ENCODE measurements at regions of chr3 and their contacts with region 1.

Region 1: GRCh38 chr3:139588450-139588849 is 48.9 kb upstream of the RBP1 start:
- DNase-seq: peak; percentile 63 to 71
- H3K4me3 ChIP-seq: no peak overlapping the region
- H3K4me3 Mint-ChIP-seq: no peak overlapping the region
- H3K27ac Mint-ChIP-seq: no peak overlapping the region
- H3K4me1 ChIP-seq: no peaks in the 10 kb centered on the region; the same call in 1 of the 2 replicates
- H3K4me1 Mint-ChIP-seq: peaks cover 12% of the 10 kb centered on the region
- H3K27me3 ChIP-seq: no peaks in the 10 kb centered on the region
- H3K27me3 Mint-ChIP-seq: no peaks in the 10 kb centered on the region
- CTCF ChIP-seq: peak; percentile 36 to 58

Region 2: GRCh38 chr3:139481116-139481515 is 107.3 kb before region 1 on chr3:
- CTCF ChIA-PET with region 1: no interaction called
- POLR2A ChIA-PET with region 1: no interaction called
- intact Hi-C with region 1: no loop called
- DNase-seq: no peak
- H3K4me3 ChIP-seq: no peak overlapping the region
- H3K4me3 Mint-ChIP-seq: no peak overlapping the region
- H3K27ac Mint-ChIP-seq: no peak overlapping the region
- H3K4me1 ChIP-seq: peaks cover 26% of the 10 kb centered on the region
- H3K4me1 Mint-ChIP-seq: peaks cover 18% of the 10 kb centered on the region
- H3K27me3 ChIP-seq: no peaks in the 10 kb centered on the region
- H3K27me3 Mint-ChIP-seq: no peaks in the 10 kb centered on the region
- CTCF ChIP-seq: no peak

Region 3: DNA sequence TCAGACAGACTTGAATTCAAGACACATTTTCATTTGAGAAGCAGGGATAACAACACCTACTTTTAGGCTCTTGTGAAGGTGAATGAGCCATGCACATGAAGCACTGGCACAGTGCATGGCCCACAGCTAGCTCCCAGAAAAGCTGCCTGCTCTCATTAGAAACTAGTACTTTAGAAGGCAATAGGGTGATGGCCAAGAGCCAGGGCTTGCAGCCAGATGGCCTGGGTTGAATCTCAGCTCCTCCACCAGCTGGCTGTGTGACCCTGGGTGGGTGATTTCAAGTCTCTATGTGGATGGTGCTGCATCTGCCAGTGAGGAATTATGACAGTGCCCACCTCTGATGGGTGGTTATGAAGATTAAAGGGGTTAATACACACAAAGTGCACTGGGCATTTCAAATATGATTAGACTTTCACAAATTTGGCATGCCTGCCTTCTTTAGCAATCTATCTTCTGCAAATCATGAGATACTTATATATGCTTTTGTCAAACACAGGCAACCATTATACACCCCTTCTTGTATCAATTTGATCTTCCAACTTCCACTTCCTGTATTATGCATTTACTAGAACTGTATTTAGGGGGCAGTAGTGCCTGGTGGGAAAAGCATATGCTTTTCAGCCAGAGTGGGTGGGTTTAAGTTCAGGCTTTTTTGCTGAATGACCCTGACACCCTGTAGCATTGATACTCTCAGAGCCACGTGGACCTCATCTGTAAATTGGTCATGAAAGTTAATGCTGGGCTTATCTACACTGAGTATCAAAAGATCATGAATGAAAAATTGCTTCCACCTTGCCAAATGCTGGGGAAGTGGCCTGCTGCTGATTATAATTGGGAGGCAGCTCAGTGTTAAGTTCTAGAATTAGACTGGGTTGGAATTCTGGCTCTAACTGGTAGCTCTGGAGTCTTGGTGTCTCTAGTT is 14.2 kb before region 1 on chr3:
- CTCF ChIA-PET with region 1: no interaction called
- POLR2A ChIA-PET with region 1: no interaction called
- intact Hi-C with region 1: no loop called
- DNase-seq: no peak
- H3K4me3 ChIP-seq: no peak overlapping the region
- H3K4me3 Mint-ChIP-seq: no peak overlapping the region
- H3K27ac Mint-ChIP-seq: no peak overlapping the region
- H3K4me1 ChIP-seq: no peaks in the 10 kb centered on the region
- H3K4me1 Mint-ChIP-seq: no peaks in the 10 kb centered on the region
- H3K27me3 ChIP-seq: no peaks in the 10 kb centered on the region
- H3K27me3 Mint-ChIP-seq: no peaks in the 10 kb centered on the region
- CTCF ChIP-seq: no peak

Region 4: DNA sequence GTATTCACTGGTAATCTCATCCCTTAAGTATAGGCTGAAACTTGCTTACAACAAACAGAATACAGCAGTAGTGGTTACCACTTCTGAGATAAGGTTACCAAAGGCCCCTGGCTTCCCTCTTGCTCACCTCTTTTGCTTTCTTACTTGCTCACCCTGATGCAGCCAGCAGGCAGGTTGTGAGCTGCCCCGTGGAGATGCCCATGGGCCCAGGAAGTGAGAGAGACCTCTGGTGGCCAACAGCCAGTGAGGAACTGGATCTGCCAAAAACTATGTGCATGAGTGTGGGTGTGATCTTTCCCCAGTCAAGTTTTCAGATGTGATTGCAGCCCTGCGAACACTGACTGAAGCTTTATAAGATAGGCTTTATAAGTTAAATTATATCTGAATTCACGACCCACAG is 40.6 kb after region 1 on chr3:
- CTCF ChIA-PET with region 1: no interaction called
- POLR2A ChIA-PET with region 1: no interaction called
- intact Hi-C with region 1: loop called (anchors 1 kb)
- DNase-seq: peak; percentile 61 to 67
- H3K4me3 ChIP-seq: no peak overlapping the region
- H3K4me3 Mint-ChIP-seq: no peak overlapping the region
- H3K27ac Mint-ChIP-seq: peak overlapping the region; percentile 67
- H3K4me1 ChIP-seq: peaks cover 18% of the 10 kb centered on the region
- H3K4me1 Mint-ChIP-seq: peaks cover 18% of the 10 kb centered on the region
- H3K27me3 ChIP-seq: no peaks in the 10 kb centered on the region
- H3K27me3 Mint-ChIP-seq: no peaks in the 10 kb centered on the region
- CTCF ChIP-seq: peak; percentile 25 to 64

Region 5: DNA sequence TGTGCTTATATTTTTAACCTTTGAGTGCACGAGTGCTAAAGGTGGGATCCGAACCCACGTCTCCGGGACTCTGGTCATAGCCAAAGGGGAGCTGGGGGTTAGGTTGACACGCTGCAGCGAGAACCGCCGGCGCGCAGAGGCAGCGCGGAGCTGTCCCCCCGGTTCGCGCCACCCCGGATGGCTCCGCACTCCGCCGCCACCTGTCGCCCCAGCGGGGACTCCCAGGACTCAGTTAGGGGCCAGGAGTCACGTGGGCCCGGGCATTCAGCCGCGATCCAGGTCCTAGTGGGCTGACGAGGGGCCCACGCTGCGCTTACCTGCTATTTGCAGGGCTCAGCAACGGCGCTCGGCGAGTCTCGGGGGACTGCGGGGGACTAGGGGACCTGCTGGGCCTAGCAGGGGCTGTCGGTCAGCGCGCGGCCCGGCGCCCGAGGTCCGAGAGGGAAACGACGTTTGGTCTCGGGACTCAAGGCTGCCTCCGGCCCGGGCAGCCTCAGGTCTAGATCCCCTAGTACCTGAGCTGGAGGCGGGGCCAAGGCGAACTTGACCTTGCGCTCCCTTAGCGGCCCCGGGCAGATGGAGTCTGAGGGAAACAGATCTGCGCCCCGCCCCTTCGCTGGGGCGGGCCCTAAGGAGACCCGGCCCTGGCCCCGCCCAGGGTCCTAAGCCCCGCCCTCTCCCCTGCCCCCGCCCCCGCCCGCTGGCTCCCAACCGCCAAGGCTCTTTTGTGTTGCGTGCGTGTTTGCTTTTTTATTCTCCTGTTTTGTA is 89.1 kb after region 1 on chr3 and contains the start of gene NMNAT3:
- CTCF ChIA-PET with region 1: no interaction called
- POLR2A ChIA-PET with region 1: no interaction called
- intact Hi-C with region 1: loop called (anchors 1 kb)
- DNase-seq: peak; percentile 85 to 87
- H3K4me3 ChIP-seq: peak within 1 kb of the TSS; percentile 65
- H3K4me3 Mint-ChIP-seq: peak within 1 kb of the TSS; percentile 82
- H3K27ac Mint-ChIP-seq: peak within 1 kb of the TSS; percentile 66
- H3K4me1 ChIP-seq: 0 out of 2 replicates have a peak, but pooled peaks cover 7% of the 10 kb centered on the region
- H3K4me1 Mint-ChIP-seq: peaks cover 7% of the 10 kb centered on the region
- H3K27me3 ChIP-seq: no peaks in the 10 kb centered on the region
- H3K27me3 Mint-ChIP-seq: no peaks in the 10 kb centered on the region
- CTCF ChIP-seq: peak in 1 of 2 experiments; percentile 31
- total RNA-seq, gene NMNAT3: 17.5 and 17.6 TPM in 2 replicates